Natural killer cell (primary cell): ENCODE measurements at regions of chr17 and their contacts with region 1.

Region 1: DNA sequence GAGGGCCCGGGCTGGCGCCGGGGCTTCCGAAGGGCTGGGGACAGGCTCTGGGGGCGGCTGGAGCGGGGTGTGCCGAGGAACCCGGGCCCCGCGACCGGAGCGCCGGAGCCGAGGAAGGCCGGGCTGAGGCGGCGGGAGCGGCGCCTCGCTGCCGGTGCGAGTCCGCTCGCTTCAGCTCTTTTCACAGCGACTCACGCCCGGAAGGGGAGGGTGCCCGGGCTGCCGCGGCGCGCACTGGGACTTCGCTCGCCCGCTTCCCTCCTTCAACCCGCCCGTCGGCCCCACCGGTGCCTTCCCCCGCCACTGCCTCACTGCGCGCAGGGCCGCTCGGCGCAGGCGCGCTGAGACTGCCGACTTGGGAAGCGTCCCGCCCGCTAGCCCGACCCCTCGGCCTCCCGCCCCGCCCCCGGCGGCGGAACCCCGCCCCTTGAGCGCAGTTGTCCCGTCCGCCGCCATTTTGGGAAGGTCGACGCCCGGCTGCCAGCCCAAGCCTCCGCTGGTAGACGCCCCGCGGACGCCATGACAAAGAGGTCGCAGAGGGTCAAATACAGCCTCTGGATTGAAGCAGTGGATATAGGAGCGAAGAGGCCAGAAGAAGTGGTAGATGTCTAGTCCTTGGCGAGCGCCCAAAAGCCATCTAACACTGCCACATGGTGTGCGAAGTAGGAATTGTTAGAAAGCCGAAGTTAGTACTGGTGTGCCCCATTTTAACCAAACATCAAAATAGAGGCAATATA is at the start of gene UBE2G1:
- DNase-seq: peak; percentile 98 to 99
- ATAC-seq: peak; percentile 84 to 95 (median 87)
- H3K4me3 ChIP-seq: peak within 1 kb of the TSS; percentile 55
- H3K4me3 Mint-ChIP-seq: peak within 1 kb of the TSS; percentile 82
- H3K27ac ChIP-seq: peak within 1 kb of the TSS; percentile 82
- H3K27ac Mint-ChIP-seq: peak within 1 kb of the TSS; percentile 85 to 87
- H3K4me1 ChIP-seq: peaks cover 21% of the 10 kb centered on the region
- H3K4me1 Mint-ChIP-seq: peaks cover 21 to 27% of the 10 kb centered on the region in 2 donors
- H3K27me3 ChIP-seq: no peaks in the 10 kb centered on the region
- H3K27me3 Mint-ChIP-seq: no peaks in the 10 kb centered on the region
- CTCF ChIP-seq: no peak
- total RNA-seq, gene UBE2G1: 58.2 to 76.4 (median 64.7) TPM

Region 2: GRCh38 chr17:4143563-4144421 is 222.7 kb before region 1 on chr17:
- intact Hi-C with region 1: loop called (anchors 1 kb)
- DNase-seq: peak; percentile 89 to 98
- ATAC-seq: peak; percentile 62 to 84 (median 69)
- H3K4me3 ChIP-seq: peak overlapping the region; percentile 87
- H3K4me3 Mint-ChIP-seq: peak overlapping the region; percentile 100
- H3K27ac ChIP-seq: peak overlapping the region; percentile 95
- H3K27ac Mint-ChIP-seq: peak overlapping the region; percentile 99 to 100
- H3K4me1 ChIP-seq: peaks cover 18% of the 10 kb centered on the region
- H3K4me1 Mint-ChIP-seq: peaks cover 49 to 53% of the 10 kb centered on the region in 2 donors
- H3K27me3 ChIP-seq: no peaks in the 10 kb centered on the region
- H3K27me3 Mint-ChIP-seq: no peaks in the 10 kb centered on the region
- CTCF ChIP-seq: no peak

Region 3: DNA sequence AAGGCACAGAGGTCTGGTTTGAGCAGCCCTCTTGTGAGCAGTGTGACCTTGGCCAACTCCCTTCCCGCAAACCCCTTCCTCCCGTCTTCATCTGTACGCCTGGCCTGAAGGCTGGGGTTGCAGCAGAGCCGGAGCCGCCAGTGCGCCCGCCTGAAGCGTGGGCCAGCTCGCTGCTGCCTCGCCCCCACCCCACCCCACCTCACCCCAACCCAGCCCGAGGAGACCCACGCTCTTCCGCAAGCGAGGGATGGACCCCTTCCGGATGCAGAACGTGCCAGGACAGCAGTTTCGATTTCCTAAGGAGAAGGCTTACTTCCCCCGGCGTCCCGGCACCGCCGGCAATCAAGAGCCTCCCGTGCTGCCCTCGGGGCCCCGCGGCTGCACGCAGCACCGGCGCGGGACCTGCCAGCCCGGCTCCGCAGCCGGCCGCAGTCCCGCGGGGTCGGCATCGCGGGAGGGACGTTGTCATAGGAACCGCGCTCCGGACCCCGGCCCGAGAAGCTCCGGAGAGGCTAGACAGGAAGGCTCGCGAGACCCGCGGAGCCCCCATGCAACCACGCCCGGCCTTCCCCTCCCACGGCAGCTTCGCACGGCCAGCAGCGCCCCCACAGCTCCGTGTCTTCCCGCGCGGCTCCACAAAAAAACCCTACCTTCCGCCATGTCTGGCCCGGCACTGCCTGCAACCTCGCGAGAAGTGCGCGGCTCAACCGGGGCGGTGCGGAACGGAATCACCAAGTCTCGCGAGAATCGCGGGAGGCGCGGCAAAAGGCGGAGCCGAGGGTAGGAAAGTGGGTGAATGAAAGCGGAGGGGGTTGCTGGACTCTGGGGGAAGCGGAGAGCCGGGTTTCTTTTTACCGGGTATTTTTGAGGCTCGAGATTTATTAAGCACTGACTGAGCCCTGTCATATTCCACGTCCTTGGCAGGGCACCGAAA is 102.9 kb before region 1 on chr17 and contains the start of gene ANKFY1:
- intact Hi-C with region 1: loop called (anchors 5 kb)
- DNase-seq: peak; percentile 98
- ATAC-seq: peak; percentile 96 to 97 (median 96)
- H3K4me3 ChIP-seq: peak within 1 kb of the TSS; percentile 70
- H3K4me3 Mint-ChIP-seq: peak within 1 kb of the TSS; percentile 97
- H3K27ac ChIP-seq: peak within 1 kb of the TSS; percentile 67
- H3K27ac Mint-ChIP-seq: peak within 1 kb of the TSS; percentile 89 to 91
- H3K4me1 ChIP-seq: peaks cover 26% of the 10 kb centered on the region
- H3K4me1 Mint-ChIP-seq: peaks cover 31 to 32% of the 10 kb centered on the region in 2 donors
- H3K27me3 ChIP-seq: no peaks in the 10 kb centered on the region
- H3K27me3 Mint-ChIP-seq: no peaks in the 10 kb centered on the region
- CTCF ChIP-seq: no peak
- total RNA-seq, gene ANKFY1: 58.4 to 72.4 (median 68.8) TPM

Region 4: DNA sequence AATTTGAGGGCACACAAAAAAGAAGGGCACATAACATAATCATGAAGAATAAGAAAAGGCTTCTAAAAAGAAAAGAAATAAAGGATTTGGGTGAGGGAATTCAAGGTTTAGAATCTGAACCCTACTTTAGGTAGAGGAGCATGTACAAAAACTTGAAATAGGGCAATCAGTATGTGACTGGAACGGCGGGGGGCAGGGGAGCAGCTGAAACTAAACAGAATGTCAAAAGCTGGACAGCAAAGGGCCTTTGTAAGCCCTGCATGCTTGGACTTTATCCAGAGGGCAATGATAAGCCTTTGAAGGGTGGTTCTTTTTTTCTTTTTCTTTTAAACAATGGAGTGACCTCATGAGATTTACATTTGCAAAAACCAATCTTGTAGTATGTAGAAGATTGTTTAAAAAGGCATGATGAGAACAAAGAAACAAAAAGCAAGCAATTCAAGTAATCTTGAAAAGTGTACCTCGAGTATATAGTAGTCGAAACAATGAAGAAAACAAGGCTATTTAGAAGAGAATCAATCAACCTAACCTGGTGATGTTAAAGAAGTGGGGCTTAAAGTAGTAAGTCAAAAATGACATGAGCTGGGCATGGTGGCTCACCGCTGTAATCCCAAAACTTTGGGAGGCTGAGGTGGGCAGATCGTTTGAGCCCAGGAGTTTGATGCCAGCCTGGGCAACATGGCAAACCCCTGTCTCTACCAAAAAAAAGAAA is 56.0 kb before region 1 on chr17:
- intact Hi-C with region 1: no loop called
- DNase-seq: no peak
- ATAC-seq: no peak
- H3K4me3 ChIP-seq: no peak overlapping the region
- H3K4me3 Mint-ChIP-seq: peak overlapping the region; percentile 14
- H3K27ac ChIP-seq: no peak overlapping the region
- H3K27ac Mint-ChIP-seq: peak overlapping the region in 1 of 2 donors; percentile 29
- H3K4me1 ChIP-seq: peaks cover 4% of the 10 kb centered on the region
- H3K4me1 Mint-ChIP-seq: peaks cover 62 to 72% of the 10 kb centered on the region in 2 donors
- H3K27me3 ChIP-seq: no peaks in the 10 kb centered on the region
- H3K27me3 Mint-ChIP-seq: no peaks in the 10 kb centered on the region
- CTCF ChIP-seq: no peak

Region 5: DNA sequence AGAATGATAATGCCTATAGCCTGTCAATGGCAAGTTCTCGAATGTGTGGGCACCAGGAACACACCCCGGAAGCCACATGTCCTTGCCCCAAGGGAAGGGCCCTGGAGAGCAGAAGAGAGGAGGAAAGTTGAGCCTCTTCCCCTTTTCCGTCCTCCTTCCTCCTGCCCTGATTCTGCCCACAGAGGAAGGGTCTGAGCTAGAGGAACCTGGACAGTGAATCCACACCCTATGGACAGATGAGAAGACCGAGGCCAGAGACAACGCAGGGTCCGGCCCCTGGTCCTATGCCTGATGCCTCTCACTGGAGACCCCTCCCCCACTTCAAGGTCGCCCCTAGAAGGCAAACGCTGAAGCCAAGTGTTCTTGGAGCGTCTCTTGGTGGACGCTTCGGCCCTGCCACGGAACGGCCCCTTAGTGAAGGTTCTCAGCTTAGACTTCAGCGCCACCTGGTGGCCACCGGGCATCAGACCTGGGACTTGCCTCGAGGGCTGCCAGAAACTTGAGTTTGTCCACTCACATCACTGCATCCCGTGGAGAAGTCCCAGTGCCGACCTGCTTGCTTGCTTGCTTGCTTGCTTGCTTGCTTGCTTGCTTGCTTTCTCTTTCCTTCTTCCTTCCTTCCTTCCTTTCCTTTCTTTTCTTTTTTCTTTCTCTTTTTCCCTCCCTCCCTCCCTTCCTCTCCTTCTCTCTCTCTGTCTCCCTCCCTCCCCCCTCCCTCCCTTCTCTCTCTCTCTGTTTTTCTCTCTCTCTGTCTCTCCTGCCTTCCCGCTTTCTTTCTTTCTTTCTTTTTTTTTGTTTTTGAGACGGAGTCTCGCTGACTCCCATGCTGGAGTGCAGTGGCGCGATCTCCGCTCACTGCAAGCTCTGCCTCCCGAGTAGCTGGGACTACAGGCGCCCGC is 46.7 kb after region 1 on chr17:
- intact Hi-C with region 1: no loop called
- DNase-seq: peak; percentile 90 to 94
- ATAC-seq: peak; percentile 94 to 98 (median 97)
- H3K4me3 ChIP-seq: no peak overlapping the region
- H3K4me3 Mint-ChIP-seq: peak overlapping the region; percentile 47
- H3K27ac ChIP-seq: no peak overlapping the region
- H3K27ac Mint-ChIP-seq: peak overlapping the region in 1 of 2 donors; percentile 63
- H3K4me1 ChIP-seq: peaks cover 8% of the 10 kb centered on the region
- H3K4me1 Mint-ChIP-seq: peaks cover 4 to 7% of the 10 kb centered on the region in 2 donors
- H3K27me3 ChIP-seq: no peaks in the 10 kb centered on the region
- H3K27me3 Mint-ChIP-seq: peaks cover 0 to 5% of the 10 kb centered on the region in 2 donors
- CTCF ChIP-seq: peak; percentile 84